CD4-positive, alpha-beta T cell (primary cell): ENCODE measurements at regions of chr7 and their contacts with region 1.

Region 1: DNA sequence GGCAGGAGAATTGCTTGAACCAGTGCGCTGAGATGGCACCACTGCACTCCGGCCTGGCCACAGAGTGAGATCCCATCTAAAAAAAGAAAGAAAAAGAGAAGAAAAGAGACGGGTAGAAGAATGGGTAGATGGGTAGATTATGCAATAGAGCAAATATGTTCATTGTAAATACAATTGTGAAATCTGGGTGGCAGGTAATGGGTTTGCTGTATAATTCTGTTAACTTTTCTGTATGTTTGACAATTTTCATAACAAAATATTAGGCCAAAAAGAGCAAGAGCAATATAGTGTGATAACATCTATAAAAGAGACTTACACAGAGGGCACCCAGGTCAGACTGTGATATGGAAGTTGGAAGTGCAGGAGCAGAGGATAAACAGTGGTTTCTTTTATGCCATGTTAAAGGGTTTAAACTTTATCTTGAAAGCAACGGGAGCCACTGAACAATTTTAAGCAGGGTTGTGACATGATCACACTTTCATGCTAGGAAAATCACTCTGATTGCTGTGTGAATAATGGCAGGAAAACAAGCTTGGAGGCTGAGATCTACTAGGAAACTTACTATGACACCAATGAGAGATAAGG is 6.7 kb upstream of the COL28A1 start:
- DNase-seq: no peak
- ATAC-seq: no peak
- H3K4me3 ChIP-seq: no peak overlapping the region
- H3K4me3 Mint-ChIP-seq: no peak overlapping the region
- H3K27ac ChIP-seq: no peak overlapping the region
- H3K27ac Mint-ChIP-seq: no peak overlapping the region
- H3K4me1 ChIP-seq: no peaks in the 10 kb centered on the region
- H3K4me1 Mint-ChIP-seq: no peaks in the 10 kb centered on the region
- H3K27me3 ChIP-seq: no peaks in the 10 kb centered on the region
- H3K27me3 Mint-ChIP-seq: peaks cover 9% of the 10 kb centered on the region
- CTCF ChIP-seq: no peak

Region 2: GRCh38 chr7:7424151-7424873 is 118.0 kb before region 1 on chr7:
- CTCF ChIA-PET with region 1: no interaction called
- POLR2A ChIA-PET with region 1: no interaction called
- intact Hi-C with region 1: loop called in 1 of 2 experiments (anchors 5 kb)
- DNase-seq: peak in 13 of 14 experiments; percentile 5 to 65 (median 19)
- ATAC-seq: peak; percentile 67
- H3K4me3 ChIP-seq: peak overlapping the region; percentile 55
- H3K4me3 Mint-ChIP-seq: peak overlapping the region; percentile 90
- H3K27ac ChIP-seq: no peak overlapping the region
- H3K27ac Mint-ChIP-seq: peak overlapping the region; percentile 19
- H3K4me1 ChIP-seq: no peaks in the 10 kb centered on the region
- H3K4me1 Mint-ChIP-seq: no peaks in the 10 kb centered on the region
- H3K27me3 ChIP-seq: no peaks in the 10 kb centered on the region
- H3K27me3 Mint-ChIP-seq: no peaks in the 10 kb centered on the region
- CTCF ChIP-seq: peak; percentile 56